ENCODE measurements at regions of chr9 and their contacts with region 1.

Region 1: DNA sequence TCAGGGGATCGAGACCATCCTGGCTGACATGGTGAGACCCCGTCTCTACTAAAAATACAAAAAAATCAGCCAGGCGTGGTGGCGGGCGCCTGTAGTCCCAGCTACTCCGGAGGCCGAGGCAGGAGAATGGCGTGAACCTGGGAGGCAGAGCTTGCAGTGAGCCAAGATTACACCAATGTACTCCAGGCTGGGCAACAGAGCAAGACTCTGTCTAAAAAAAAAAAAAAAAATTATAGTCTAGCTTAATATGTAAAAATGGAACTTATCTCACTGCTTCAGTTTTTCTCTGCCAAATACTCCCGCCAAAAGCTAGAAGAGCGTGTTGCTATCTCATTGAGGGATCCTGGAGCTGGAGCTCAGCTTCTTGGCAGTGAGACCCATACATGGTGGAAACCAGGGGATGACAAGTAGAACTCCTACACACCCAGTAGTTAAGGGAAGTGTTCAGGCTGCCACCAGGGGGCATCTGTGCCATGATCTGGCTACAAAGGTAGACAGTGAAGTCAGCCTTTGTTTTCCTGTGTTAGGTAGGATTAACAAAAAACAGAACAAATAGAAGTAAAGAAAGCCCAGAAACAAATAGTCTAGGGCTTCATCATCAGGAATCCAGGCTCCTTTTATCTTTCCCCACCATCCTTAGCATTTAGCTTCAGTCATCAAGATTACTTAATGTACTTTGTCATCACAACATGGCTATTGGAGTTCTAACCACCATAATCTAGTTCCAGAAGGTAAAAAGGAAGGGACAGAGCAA is 33.6 kb upstream of the GLIPR2 start:
- DNase-seq: peak; percentile 92
- H3K4me3 ChIP-seq: no peak overlapping the region
- H3K27ac ChIP-seq: peak overlapping the region in 2 of 4 donors; percentile 21 to 37
- H3K4me1 ChIP-seq: peaks cover 0 to 4% (median 0%) of the 10 kb centered on the region in 4 donors
- H3K27me3 ChIP-seq: no peaks in the 10 kb centered on the region
- CTCF ChIP-seq: peak; percentile 62 to 87 (median 81)
- EP300 ChIP-seq: no peak
- POLR2A ChIP-seq: no peak

Region 2: DNA sequence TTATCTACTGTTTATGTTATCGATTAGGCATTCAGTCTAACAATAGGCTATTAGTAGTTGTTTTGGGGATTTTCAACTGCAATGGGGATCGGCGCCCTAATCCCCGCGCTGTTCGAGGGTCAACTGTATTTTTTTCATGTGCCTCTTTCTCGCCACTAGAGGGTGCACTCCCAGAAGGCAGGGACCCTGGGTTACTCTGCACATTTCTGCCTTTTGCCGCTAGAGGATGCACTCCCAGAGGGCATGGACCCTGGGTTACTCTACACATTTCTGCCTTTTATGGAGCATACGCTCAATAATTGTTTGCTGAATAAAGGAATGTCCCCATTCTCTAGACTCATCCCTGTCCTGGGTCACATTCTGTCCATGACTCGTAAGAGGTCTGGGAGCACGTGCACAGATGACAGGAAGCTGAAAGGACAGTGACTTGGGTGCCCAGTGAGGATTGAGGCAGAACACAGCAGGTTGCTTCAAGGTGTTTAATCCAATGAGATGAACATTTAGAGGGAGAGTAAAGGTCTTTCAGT is 94.1 kb before region 1 on chr9:
- intact Hi-C with region 1: no loop called
- DNase-seq: peak; percentile 75
- H3K4me3 ChIP-seq: no peak overlapping the region
- H3K27ac ChIP-seq: no peak overlapping the region
- H3K4me1 ChIP-seq: peaks cover 0 to 3% (median 0%) of the 10 kb centered on the region in 4 donors
- H3K27me3 ChIP-seq: no peaks in the 10 kb centered on the region
- CTCF ChIP-seq: peak; percentile 88 to 98 (median 94)
- EP300 ChIP-seq: no peak
- POLR2A ChIP-seq: no peak

Region 3: GRCh38 chr9:36136272-36136893 is 33.5 kb after region 1 on chr9 and contains the start of gene GLIPR2:
- intact Hi-C with region 1: loop called (anchors 1 kb)
- DNase-seq: peak; percentile 92
- H3K4me3 ChIP-seq: peak within 1 kb of the TSS; percentile 69 to 99 (median 91)
- H3K27ac ChIP-seq: peak within 1 kb of the TSS; percentile 90 to 99 (median 96)
- H3K4me1 ChIP-seq: peaks cover 0 to 56% (median 46%) of the 10 kb centered on the region in 4 donors
- H3K27me3 ChIP-seq: no peaks in the 10 kb centered on the region
- CTCF ChIP-seq: peak in 1 of 4 experiments; percentile 28
- EP300 ChIP-seq: no peak
- POLR2A ChIP-seq: peak; percentile 48 to 58
- total RNA-seq, gene GLIPR2: 57.3 to 90.6 (median 77.6) TPM

Region 4: DNA sequence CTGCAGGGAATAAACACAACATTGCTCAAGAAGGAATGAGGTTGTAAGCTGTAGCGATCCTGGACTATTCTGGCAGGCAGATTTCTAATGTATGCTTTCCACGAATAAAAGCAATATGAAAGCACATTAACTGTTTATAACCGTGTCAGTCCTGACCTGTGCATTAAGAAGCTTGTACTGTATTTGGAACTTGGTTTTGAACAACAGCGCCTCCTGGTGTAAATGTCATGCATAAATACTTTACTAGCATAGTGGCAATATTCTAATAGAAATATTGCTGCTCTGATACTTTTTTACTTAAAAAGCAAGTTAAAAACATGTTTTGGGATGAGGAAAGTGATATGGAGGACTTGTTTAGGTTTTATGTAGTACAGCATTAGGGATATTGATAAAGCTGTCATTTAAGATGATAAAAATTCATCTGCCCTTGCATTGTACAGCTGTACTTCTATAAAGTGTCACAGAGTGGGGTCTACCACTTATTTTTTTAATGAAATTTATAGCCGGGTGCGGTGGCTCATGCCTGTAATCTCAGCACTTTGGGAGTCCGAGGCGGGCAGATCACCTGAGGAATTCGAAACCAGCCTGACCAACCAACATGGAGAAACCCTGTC is 226.0 kb after region 1 on chr9:
- intact Hi-C with region 1: loop called (anchors 5 kb)
- DNase-seq: no peak
- H3K4me3 ChIP-seq: no peak overlapping the region
- H3K27ac ChIP-seq: no peak overlapping the region
- H3K4me1 ChIP-seq: peaks cover 0 to 11% (median 0%) of the 10 kb centered on the region in 4 donors
- H3K27me3 ChIP-seq: no peaks in the 10 kb centered on the region
- CTCF ChIP-seq: peak; percentile 69 to 86 (median 79)
- EP300 ChIP-seq: no peak
- POLR2A ChIP-seq: no peak

Measured in sigmoid colon (tissue), 7 donors.